Stomach (tissue), 19 donors: ENCODE measurements at regions of chr3 and their contacts with region 1.

Region 1: GRCh38 chr3:30611613-30612436 is 5.4 kb downstream of the TGFBR2 start:
- DNase-seq: no peak
- H3K4me3 ChIP-seq: peak overlapping the region in 3 of 4 donors; percentile 13 to 81 (median 60)
- H3K27ac ChIP-seq: peak overlapping the region; percentile 24 to 100 (median 96)
- H3K4me1 ChIP-seq: peaks cover 47 to 92% (median 71%) of the 10 kb centered on the region in 4 donors
- H3K27me3 ChIP-seq: no peaks in the 10 kb centered on the region
- CTCF ChIP-seq: no peak
- EP300 ChIP-seq: no peak
- POLR2A ChIP-seq: no peak

Region 2: GRCh38 chr3:30659270-30660130 is 47.7 kb after region 1 on chr3:
- intact Hi-C with region 1: loop called (anchors 10 kb)
- DNase-seq: no peak
- H3K4me3 ChIP-seq: no peak overlapping the region
- H3K27ac ChIP-seq: peak overlapping the region in 4 of 5 donors; percentile 56 to 81 (median 72)
- H3K4me1 ChIP-seq: peaks cover 33 to 97% (median 64%) of the 10 kb centered on the region in 4 donors
- H3K27me3 ChIP-seq: no peaks in the 10 kb centered on the region
- CTCF ChIP-seq: no peak
- EP300 ChIP-seq: no peak
- POLR2A ChIP-seq: no peak

Region 3: DNA sequence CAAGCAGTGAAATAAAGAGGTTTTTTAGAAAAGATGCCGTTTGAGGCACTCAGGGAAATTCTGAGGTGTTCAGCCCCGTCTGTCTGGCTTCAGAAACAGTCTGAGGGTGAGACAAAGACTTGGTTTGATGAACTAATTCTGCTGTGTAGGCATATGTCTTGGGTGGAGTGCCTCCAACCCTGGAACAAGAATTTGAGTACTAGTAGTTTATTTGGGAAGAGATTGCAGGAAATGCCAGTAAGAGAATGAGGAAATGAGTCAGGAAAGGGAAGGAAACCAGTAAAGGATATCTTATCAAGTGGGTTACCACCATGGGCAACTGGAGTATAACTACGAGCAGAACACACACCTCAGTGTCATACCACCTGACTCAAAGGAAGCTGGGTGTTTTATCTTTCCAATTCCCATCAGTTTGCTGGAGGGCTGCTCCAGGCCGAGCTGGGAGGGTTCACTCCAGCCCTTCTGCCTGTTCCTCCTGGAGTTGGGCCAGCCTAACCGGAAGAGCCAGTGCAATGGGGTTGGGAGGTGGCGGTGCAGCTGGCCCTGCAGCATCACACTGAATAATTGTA is 69.9 kb after region 1 on chr3:
- intact Hi-C with region 1: no loop called
- DNase-seq: peak in 1 of 2 donors; percentile 69
- H3K4me3 ChIP-seq: no peak overlapping the region
- H3K27ac ChIP-seq: peak overlapping the region; percentile 7 to 82 (median 71)
- H3K4me1 ChIP-seq: peaks cover 39 to 84% (median 64%) of the 10 kb centered on the region in 4 donors
- H3K27me3 ChIP-seq: no peaks in the 10 kb centered on the region
- CTCF ChIP-seq: no peak
- EP300 ChIP-seq: no peak
- POLR2A ChIP-seq: no peak